ENCODE measurements at regions of chr16 and their contacts with region 1.

Region 1: DNA sequence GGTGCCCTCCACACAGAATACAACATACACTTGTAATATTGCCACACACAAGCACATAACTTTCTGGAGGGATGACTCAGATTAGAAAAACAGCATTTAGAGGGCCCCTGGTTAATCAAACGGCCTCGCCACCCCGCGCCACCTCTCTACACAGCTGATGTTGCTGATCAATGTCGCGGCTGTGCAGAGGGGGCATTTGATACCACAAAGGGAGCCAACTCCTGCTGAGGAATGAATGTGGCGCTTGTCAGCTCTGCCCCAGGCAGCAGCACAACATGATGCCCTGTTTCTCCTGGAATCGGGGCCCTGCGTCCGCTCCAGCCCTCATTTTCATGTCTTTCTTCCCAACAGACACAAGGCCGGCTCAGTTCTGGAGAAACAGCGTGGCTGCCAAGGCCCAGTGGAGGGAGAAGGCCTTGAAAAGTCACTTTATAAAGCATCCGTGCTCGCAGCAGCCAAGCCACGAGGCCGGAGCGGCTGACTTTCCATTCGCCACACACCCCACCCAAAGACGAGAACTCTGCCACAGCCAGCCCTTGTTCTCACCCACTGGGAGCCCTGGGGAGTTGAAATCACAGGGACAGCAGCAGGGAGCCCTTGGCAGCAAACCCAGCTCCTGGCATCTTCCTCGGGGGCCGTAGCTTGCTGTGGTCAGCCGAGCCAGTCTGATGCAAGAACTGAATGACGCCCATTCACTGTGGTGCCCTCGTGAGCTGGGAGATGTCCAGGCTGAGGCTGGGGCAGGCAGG is 65.6 kb downstream of the XYLT1 start:
- DNase-seq: peak; percentile 84 to 94
- H3K4me3 ChIP-seq: peak overlapping the region; percentile 2 to 39
- H3K27ac ChIP-seq: peak overlapping the region; percentile 86 to 96
- H3K4me1 ChIP-seq: peaks cover 4 to 22% of the 10 kb centered on the region in 2 donors
- H3K27me3 ChIP-seq: no peaks in the 10 kb centered on the region
- CTCF ChIP-seq: no peak

Region 2: GRCh38 chr16:17369421-17370222 is 35.5 kb before region 1 on chr16:
- intact Hi-C with region 1: loop called (anchors 5 kb)
- DNase-seq: peak in 1 of 2 donors; percentile 80
- H3K4me3 ChIP-seq: no peak overlapping the region
- H3K27ac ChIP-seq: peak overlapping the region; percentile 47 to 66
- H3K4me1 ChIP-seq: peaks cover 3 to 23% of the 10 kb centered on the region in 2 donors
- H3K27me3 ChIP-seq: no peaks in the 10 kb centered on the region
- CTCF ChIP-seq: no peak

Region 3: GRCh38 chr16:17377360-17378324 is 27.5 kb before region 1 on chr16:
- intact Hi-C with region 1: loop called (anchors 2 kb)
- DNase-seq: no peak
- H3K4me3 ChIP-seq: no peak overlapping the region
- H3K27ac ChIP-seq: peak overlapping the region; percentile 59 to 71
- H3K4me1 ChIP-seq: peaks cover 0 to 23% of the 10 kb centered on the region in 2 donors
- H3K27me3 ChIP-seq: no peaks in the 10 kb centered on the region
- CTCF ChIP-seq: no peak

Measured in ascending aorta (tissue), 2 donors.